ENCODE measurements at regions of chr17 and their contacts with region 1.

Region 1: DNA sequence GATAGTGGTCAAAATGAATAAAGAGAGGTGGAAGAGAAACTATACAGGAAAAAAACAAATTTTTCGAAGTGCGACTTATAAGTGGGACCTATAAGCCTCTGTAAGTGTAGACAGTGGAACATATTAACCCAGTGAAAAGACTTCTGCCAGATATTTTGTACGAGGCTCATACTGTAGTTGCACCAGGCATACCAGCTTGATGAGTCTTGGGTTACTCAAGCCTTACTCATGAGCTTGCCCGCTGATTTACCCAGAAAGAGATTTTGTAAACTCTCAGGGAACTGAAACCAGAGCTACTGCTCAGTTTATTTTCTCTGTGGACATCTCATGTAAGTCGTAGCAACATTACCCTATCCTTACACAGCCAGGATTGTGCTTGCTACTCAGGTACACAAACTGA is 708.0 kb upstream of the SOX9 start:
- DNase-seq: peak; percentile 52 to 93
- H3K4me3 ChIP-seq: no peak overlapping the region
- H3K27ac ChIP-seq: peak overlapping the region; percentile 98
- H3K4me1 ChIP-seq: peaks cover 23% of the 10 kb centered on the region
- H3K27me3 ChIP-seq: no peaks in the 10 kb centered on the region
- CTCF ChIP-seq: no peak

Region 2: DNA sequence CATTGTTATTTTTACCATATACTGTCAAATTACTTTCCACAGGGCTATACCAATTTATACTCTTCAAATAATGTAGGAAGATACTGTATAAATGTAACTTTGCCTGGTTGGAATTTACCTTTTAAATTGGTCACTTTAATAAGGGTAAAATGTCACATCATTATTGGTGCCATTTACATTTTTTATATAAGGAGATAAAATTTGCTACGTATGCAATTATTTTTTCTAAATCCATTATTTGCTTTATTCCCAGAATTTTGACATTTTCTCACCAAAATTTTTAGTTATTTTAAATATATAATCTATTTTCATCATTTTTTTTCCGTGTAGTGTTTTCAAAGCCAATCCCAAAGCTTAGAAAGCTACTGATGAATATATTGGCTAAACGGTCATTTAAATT is 578.8 kb before region 1 on chr17:
- CTCF ChIA-PET with region 1: no interaction called
- POLR2A ChIA-PET with region 1: no interaction called
- intact Hi-C with region 1: no loop called
- DNase-seq: no peak
- H3K4me3 ChIP-seq: no peak overlapping the region
- H3K27ac ChIP-seq: no peak overlapping the region
- H3K4me1 ChIP-seq: no peaks in the 10 kb centered on the region
- H3K27me3 ChIP-seq: no peaks in the 10 kb centered on the region
- CTCF ChIP-seq: no peak

Region 3: GRCh38 chr17:71423871-71424546 is 11.2 kb after region 1 on chr17:
- CTCF ChIA-PET with region 1: no interaction called
- POLR2A ChIA-PET with region 1: no interaction called
- intact Hi-C with region 1: loop called (anchors 1 kb)
- DNase-seq: peak; percentile 59 to 98
- H3K4me3 ChIP-seq: 0 out of 2 replicates have a peak overlapping the region, but pooled peaks have one; percentile 10
- H3K27ac ChIP-seq: peak overlapping the region; percentile 96
- H3K4me1 ChIP-seq: peaks cover 24% of the 10 kb centered on the region
- H3K27me3 ChIP-seq: no peaks in the 10 kb centered on the region
- CTCF ChIP-seq: peak; percentile 30; the same call in 1 of the 2 replicates

Region 4: DNA sequence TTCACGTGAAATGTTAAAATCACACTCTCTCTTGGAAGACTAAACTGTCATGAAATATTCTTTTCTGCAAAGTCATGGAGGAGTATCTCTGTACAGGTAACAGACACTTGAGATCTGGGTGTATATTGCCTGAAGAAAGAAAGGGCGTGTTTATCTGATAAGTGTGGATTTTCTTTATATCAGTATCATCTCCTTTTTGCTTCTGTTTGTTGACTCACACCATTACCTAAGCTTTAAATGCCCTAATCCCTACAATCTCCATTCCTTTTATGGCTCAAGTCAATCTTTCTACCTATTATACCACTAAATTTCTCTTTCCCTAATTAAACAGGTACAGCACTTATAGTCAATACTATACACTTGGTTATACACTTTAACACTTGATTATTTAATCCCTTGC is 34.9 kb after region 1 on chr17:
- CTCF ChIA-PET with region 1: no interaction called
- POLR2A ChIA-PET with region 1: no interaction called
- intact Hi-C with region 1: loop called (anchors 1 kb)
- DNase-seq: peak in 1 of 2 experiments; percentile 60
- H3K4me3 ChIP-seq: no peak overlapping the region
- H3K27ac ChIP-seq: no peak overlapping the region
- H3K4me1 ChIP-seq: peaks cover 8% of the 10 kb centered on the region; the same call in 1 of the 2 replicates
- H3K27me3 ChIP-seq: no peaks in the 10 kb centered on the region
- CTCF ChIP-seq: no peak